ENCODE measurements at regions of chr14 and their contacts with region 1.

Region 1: GRCh38 chr14:75487155-75487671 is 35.1 kb upstream of the BATF start:
- DNase-seq: no peak
- H3K4me3 ChIP-seq: no peak overlapping the region
- CTCF ChIP-seq: no peak

Region 2: GRCh38 chr14:75126679-75127473 is 360.3 kb before region 1 on chr14 and contains the start of gene NEK9:
- in situ Hi-C with region 1: loop called (anchors 25 kb)
- DNase-seq: no peak
- H3K4me3 ChIP-seq: peak within 1 kb of the TSS; percentile 58
- CTCF ChIP-seq: no peak

Region 3: GRCh38 chr14:75307700-75308379 is 179.4 kb before region 1 on chr14:
- in situ Hi-C with region 1: loop called (anchors 25 kb)
- DNase-seq: peak; percentile 74
- H3K4me3 ChIP-seq: no peak overlapping the region
- CTCF ChIP-seq: peak; percentile 91

Measured in astrocyte of the cerebellum (primary cell).